ENCODE measurements at regions of chr7 and their contacts with region 1.

Region 1: GRCh38 chr7:142835487-142835886 is 19.4 kb upstream of the EPHB6 start:
- DNase-seq: peak in 5 of 9 donors; percentile 29 to 57 (median 42)
- ATAC-seq: no peak
- H3K4me3 ChIP-seq: no peak overlapping the region
- H3K4me3 Mint-ChIP-seq: peak overlapping the region in 5 of 10 donors; percentile 18 to 61 (median 45)
- H3K27ac ChIP-seq: no peak overlapping the region
- H3K27ac Mint-ChIP-seq: peak overlapping the region in 8 of 9 donors; percentile 15 to 88 (median 70)
- H3K4me1 ChIP-seq: no peaks in the 10 kb centered on the region
- H3K4me1 Mint-ChIP-seq: peaks cover 2 to 34% (median 16%) of the 10 kb centered on the region in 7 donors
- H3K27me3 ChIP-seq: no peaks in the 10 kb centered on the region
- H3K27me3 Mint-ChIP-seq: peaks cover 0 to 4% (median 0%) of the 10 kb centered on the region in 5 donors

Region 2: DNA sequence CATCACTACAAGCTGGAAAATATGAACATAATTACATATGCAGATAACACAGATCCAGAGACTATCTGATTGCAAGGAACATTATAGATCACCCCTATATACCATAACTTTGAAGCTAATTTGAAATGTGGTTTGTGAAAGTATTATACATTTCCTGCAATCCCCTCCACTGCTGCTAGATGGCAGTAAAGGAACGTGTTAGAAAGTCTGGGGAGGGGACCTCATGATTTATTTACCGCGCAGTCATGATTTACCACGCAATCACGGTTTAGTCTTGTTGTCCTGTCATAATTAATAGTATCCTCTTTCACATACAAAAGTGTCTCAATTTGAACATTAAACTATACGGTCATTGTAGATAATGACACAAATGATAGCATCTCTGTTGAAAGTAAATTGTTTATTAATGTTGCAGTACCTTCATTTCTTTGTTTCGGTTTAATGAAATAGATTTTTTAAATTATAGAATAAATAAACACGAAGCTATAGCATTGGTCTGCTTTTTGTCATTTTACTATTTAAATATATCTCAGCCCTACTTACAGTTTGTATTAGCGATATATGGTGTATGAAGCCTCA is 231.5 kb before region 1 on chr7:
- CTCF ChIA-PET with region 1: no interaction called
- POLR2A ChIA-PET with region 1: interaction called, 3 read pairs
- intact Hi-C with region 1: loop called in 1 of 2 experiments (anchors 1 kb)
- DNase-seq: peak in 8 of 9 donors; percentile 34 to 67 (median 56)
- ATAC-seq: peak; percentile 82
- H3K4me3 ChIP-seq: no peak overlapping the region
- H3K4me3 Mint-ChIP-seq: peak overlapping the region in 9 of 10 donors; percentile 38 to 66 (median 55)
- H3K27ac ChIP-seq: no peak overlapping the region
- H3K27ac Mint-ChIP-seq: peak overlapping the region in 6 of 9 donors; percentile 3 to 90 (median 58)
- H3K4me1 ChIP-seq: no peaks in the 10 kb centered on the region
- H3K4me1 Mint-ChIP-seq: peaks cover 0 to 18% (median 12%) of the 10 kb centered on the region in 7 donors
- H3K27me3 ChIP-seq: no peaks in the 10 kb centered on the region
- H3K27me3 Mint-ChIP-seq: peaks cover 0 to 19% (median 0%) of the 10 kb centered on the region in 5 donors